ENCODE measurements at regions of chr2 and their contacts with region 1.

Region 1: GRCh38 chr2:84526562-84526961 is 10.3 kb downstream of the DNAH6 start:
- DNase-seq: no peak
- ATAC-seq: no peak
- H3K4me3 Mint-ChIP-seq: no peak overlapping the region
- H3K27ac Mint-ChIP-seq: no peak overlapping the region
- H3K4me1 Mint-ChIP-seq: no peaks in the 10 kb centered on the region
- H3K27me3 Mint-ChIP-seq: peaks cover 3% of the 10 kb centered on the region; the same call in 1 of the 2 replicates
- CTCF ChIP-seq: no peak

Region 2: GRCh38 chr2:84516234-84516986 is 10.2 kb before region 1 on chr2 and contains the start of gene DNAH6:
- CTCF ChIA-PET with region 1: interaction called, 10 read pairs
- POLR2A ChIA-PET with region 1: no interaction called
- DNase-seq: peak; percentile 91
- ATAC-seq: peak; percentile 100
- H3K4me3 Mint-ChIP-seq: peak within 1 kb of the TSS; percentile 77
- H3K27ac Mint-ChIP-seq: peak within 1 kb of the TSS; percentile 65
- H3K4me1 Mint-ChIP-seq: peaks cover 11% of the 10 kb centered on the region
- H3K27me3 Mint-ChIP-seq: peaks cover 11% of the 10 kb centered on the region
- CTCF ChIP-seq: no peak
- total RNA-seq, gene DNAH6: 0.18 to 0.39 TPM (median 0.27 TPM) in 3 replicates

Region 3: DNA sequence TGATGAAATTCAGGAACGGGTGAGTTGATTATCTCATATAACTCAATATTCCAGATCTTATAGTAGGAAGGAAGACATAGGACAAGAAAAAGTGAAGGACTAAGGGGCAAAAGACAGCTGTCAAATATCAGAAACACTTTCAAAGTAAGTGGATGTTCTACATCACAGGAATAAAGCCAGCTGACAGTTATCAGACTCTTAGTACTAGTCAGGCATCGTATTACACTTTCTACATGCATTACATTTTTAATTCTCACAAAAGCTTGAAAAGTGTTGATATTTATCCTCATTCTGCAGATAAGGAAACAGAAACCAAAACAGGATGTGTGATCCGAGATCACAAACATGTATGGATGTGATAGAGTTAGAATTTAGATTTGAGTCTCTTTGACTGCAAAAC is 53.1 kb after region 1 on chr2:
- CTCF ChIA-PET with region 1: no interaction called
- POLR2A ChIA-PET with region 1: no interaction called
- DNase-seq: no peak
- ATAC-seq: no peak
- H3K4me3 Mint-ChIP-seq: no peak overlapping the region
- H3K27ac Mint-ChIP-seq: no peak overlapping the region
- H3K4me1 Mint-ChIP-seq: no peaks in the 10 kb centered on the region
- H3K27me3 Mint-ChIP-seq: no peaks in the 10 kb centered on the region
- CTCF ChIP-seq: no peak

Measured in WTC11 (cell line).